HEK293 (cell line): ENCODE measurements at regions of chr12 and their contacts with region 1.

Region 1: GRCh38 chr12:75526655-75527511 is 15.5 kb upstream of the KRR1 start:
- H3K4me3 ChIP-seq: no peak overlapping the region
- H3K27ac ChIP-seq: no peak overlapping the region
- H3K4me1 ChIP-seq: no peaks in the 10 kb centered on the region
- CTCF ChIP-seq: no peak

Region 2: DNA sequence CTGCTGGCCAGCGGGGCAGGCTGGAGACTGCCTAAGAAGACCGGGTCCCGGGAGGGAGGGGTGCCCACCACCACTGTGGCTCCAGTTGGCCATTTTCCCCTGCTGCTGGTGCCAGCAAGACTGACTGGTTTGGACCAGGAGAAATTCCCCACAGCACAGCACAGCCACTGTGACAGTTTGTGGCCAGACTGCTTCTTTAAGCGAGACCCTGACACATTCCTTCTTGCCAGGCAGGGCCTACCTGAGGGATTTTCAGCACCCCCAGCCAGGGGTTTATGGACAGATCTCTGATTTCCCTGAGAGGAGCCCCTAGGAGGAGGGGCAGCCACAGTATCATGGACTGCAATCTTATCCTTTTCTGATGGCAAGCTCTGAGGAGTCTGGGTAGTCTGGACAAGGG is 176.9 kb before region 1 on chr12:
- CTCF ChIA-PET with region 1: no interaction called
- POLR2A ChIA-PET with region 1: no interaction called
- H3K4me3 ChIP-seq: no peak overlapping the region
- H3K27ac ChIP-seq: no peak overlapping the region
- H3K4me1 ChIP-seq: no peaks in the 10 kb centered on the region; the same call in 1 of the 2 replicates
- CTCF ChIP-seq: no peak

Region 3: GRCh38 chr12:76031537-76032073 is 504.7 kb after region 1 on chr12 and contains the start of gene PHLDA1:
- CTCF ChIA-PET with region 1: interaction called, 43 read pairs
- POLR2A ChIA-PET with region 1: interaction called, 5 read pairs
- H3K4me3 ChIP-seq: peak within 1 kb of the TSS; percentile 77
- H3K27ac ChIP-seq: peak within 1 kb of the TSS; percentile 86
- H3K4me1 ChIP-seq: no peaks in the 10 kb centered on the region; the same call in 1 of the 2 replicates
- CTCF ChIP-seq: peak; percentile 96

Region 4: GRCh38 chr12:76037130-76038103 is 510.5 kb after region 1 on chr12:
- CTCF ChIA-PET with region 1: interaction called, 43 read pairs
- POLR2A ChIA-PET with region 1: no interaction called
- H3K4me3 ChIP-seq: no peak overlapping the region
- H3K27ac ChIP-seq: no peak overlapping the region
- H3K4me1 ChIP-seq: no peaks in the 10 kb centered on the region
- CTCF ChIP-seq: no peak